ENCODE measurements at regions of chr13 and their contacts with region 1.

Region 1: DNA sequence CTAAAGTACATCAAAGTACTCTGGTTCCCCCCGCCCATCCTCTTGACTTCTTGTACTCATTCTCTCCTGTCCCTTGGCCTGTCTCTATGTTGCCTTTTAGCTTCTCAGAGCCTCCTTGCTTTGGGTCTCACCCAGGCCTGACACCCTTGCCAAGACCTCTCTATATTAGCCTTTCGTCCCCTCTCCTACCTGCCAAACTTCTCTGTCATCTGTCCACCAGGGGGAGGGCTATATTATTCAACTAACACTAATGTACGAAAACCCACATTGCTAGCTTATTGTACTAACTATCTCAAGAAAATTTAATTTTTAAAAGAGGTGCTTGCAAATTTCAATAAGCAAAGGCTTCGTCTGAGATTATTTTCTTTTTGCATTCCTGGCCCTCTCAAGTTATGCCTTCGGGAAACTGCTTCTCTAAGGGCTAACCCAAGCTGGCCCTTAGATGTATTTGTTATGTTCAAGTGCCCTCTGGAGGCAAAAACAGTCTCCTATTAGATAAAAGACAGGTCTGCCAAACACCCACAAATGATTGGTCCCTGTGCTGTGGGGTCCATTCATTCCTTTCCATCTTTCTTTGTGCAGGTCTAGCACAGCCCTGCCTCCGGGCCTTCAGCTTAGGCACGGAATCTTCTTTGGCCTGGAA is 6.3 kb upstream of the MRPS31 start:
- DNase-seq: peak; percentile 48
- H3K4me3 Mint-ChIP-seq: peak overlapping the region; percentile 77
- H3K27ac Mint-ChIP-seq: peak overlapping the region; percentile 99
- H3K4me1 Mint-ChIP-seq: peaks cover 25% of the 10 kb centered on the region
- H3K27me3 Mint-ChIP-seq: no peaks in the 10 kb centered on the region

Region 2: GRCh38 chr13:39942552-39943273 is 834.6 kb before region 1 on chr13:
- CTCF ChIA-PET with region 1: interaction called, 6 read pairs
- intact Hi-C with region 1: loop called (anchors 2 kb)
- DNase-seq: peak; percentile 82
- H3K4me3 Mint-ChIP-seq: no peak overlapping the region
- H3K27ac Mint-ChIP-seq: no peak overlapping the region
- H3K4me1 Mint-ChIP-seq: peaks cover 7% of the 10 kb centered on the region
- H3K27me3 Mint-ChIP-seq: no peaks in the 10 kb centered on the region

Region 3: GRCh38 chr13:40149611-40150274 is 627.5 kb before region 1 on chr13:
- CTCF ChIA-PET with region 1: no interaction called
- intact Hi-C with region 1: loop called (anchors 2 kb)
- DNase-seq: peak; percentile 37
- H3K4me3 Mint-ChIP-seq: no peak overlapping the region
- H3K27ac Mint-ChIP-seq: peak overlapping the region; percentile 52
- H3K4me1 Mint-ChIP-seq: peaks cover 73% of the 10 kb centered on the region
- H3K27me3 Mint-ChIP-seq: no peaks in the 10 kb centered on the region

Region 4: GRCh38 chr13:40438999-40439797 is 338.1 kb before region 1 on chr13:
- CTCF ChIA-PET with region 1: no interaction called
- intact Hi-C with region 1: loop called (anchors 2 kb)
- DNase-seq: peak; percentile 54
- H3K4me3 Mint-ChIP-seq: peak overlapping the region; percentile 33
- H3K27ac Mint-ChIP-seq: peak overlapping the region; percentile 46
- H3K4me1 Mint-ChIP-seq: peaks cover 40% of the 10 kb centered on the region
- H3K27me3 Mint-ChIP-seq: no peaks in the 10 kb centered on the region

Region 5: GRCh38 chr13:40764587-40765403 is 12.5 kb before region 1 on chr13:
- CTCF ChIA-PET with region 1: interaction called, 30 read pairs
- intact Hi-C with region 1: loop called (anchors 1 kb)
- DNase-seq: peak; percentile 67
- H3K4me3 Mint-ChIP-seq: no peak overlapping the region
- H3K27ac Mint-ChIP-seq: peak overlapping the region; percentile 71
- H3K4me1 Mint-ChIP-seq: peaks cover 54% of the 10 kb centered on the region
- H3K27me3 Mint-ChIP-seq: no peaks in the 10 kb centered on the region

Region 6: GRCh38 chr13:41019011-41019487 is 241.8 kb after region 1 on chr13 and contains the start of gene ELF1:
- CTCF ChIA-PET with region 1: interaction called, 4 read pairs
- intact Hi-C with region 1: loop called (anchors 1 kb)
- DNase-seq: peak; percentile 67
- H3K4me3 Mint-ChIP-seq: peak within 1 kb of the TSS; percentile 89
- H3K27ac Mint-ChIP-seq: peak within 1 kb of the TSS; percentile 99
- H3K4me1 Mint-ChIP-seq: peaks cover 32% of the 10 kb centered on the region
- H3K27me3 Mint-ChIP-seq: no peaks in the 10 kb centered on the region
- total RNA-seq, gene ELF1: 61.7 to 62.3 TPM

Measured in activated naive CD4-positive, alpha-beta T cell treated with anti-CD3 and anti-CD28 coated beads for 36 hours (primary cell).